HepG2 (cell line): ENCODE measurements at regions of chrX and their contacts with region 1.

Region 1: GRCh38 chrX:132226169-132226568 is 6.9 kb upstream of the RAP2C start:
- DNase-seq: no peak
- ATAC-seq: no peak
- H3K4me3 ChIP-seq: no peak overlapping the region
- H3K27ac ChIP-seq: no peak overlapping the region
- H3K4me1 ChIP-seq: no peaks in the 10 kb centered on the region
- H3K27me3 ChIP-seq: no peaks in the 10 kb centered on the region
- CTCF ChIP-seq: peak; percentile 5; the same call in 1 of the 2 replicates
- EP300 ChIP-seq: no peak
- POLR2A ChIP-seq: no peak
- RAD21 ChIP-seq: no peak

Region 2: DNA sequence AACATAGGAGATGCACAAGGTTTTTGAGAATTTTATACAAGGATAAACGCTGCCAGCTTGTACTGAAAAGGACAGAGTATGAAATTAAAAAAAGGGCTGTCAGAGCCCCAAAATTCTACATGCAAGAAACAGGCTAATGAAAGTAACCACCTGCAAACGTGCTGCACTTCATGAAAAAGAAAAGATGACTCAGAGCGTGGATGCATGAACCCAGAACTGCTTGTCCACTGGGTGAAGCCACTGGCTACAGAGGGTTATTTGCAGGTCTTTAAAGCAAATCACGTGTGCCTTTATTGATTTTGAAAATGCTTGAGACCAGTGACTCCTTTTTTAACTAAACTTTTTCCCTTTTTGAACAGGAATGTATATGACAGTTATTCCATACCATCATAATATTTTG is 73.0 kb before region 1 on chrX:
- CTCF ChIA-PET with region 1: no interaction called
- POLR2A ChIA-PET with region 1: no interaction called
- in situ Hi-C with region 1: no loop called
- intact Hi-C with region 1: no loop called
- DNase-seq: no peak
- ATAC-seq: no peak
- H3K4me3 ChIP-seq: no peak overlapping the region
- H3K27ac ChIP-seq: no peak overlapping the region
- H3K4me1 ChIP-seq: no peaks in the 10 kb centered on the region
- H3K27me3 ChIP-seq: no peaks in the 10 kb centered on the region
- CTCF ChIP-seq: no peak
- EP300 ChIP-seq: no peak
- POLR2A ChIP-seq: no peak
- RAD21 ChIP-seq: no peak

Region 3: GRCh38 chrX:132375934-132376333 is 149.8 kb after region 1 on chrX:
- CTCF ChIA-PET with region 1: no interaction called
- POLR2A ChIA-PET with region 1: no interaction called
- in situ Hi-C with region 1: no loop called
- intact Hi-C with region 1: loop called (anchors 10 kb)
- DNase-seq: no peak
- ATAC-seq: peak; percentile 57; the same call in 2 of the 3 replicates
- H3K4me3 ChIP-seq: no peak overlapping the region
- H3K27ac ChIP-seq: no peak overlapping the region
- H3K4me1 ChIP-seq: peaks cover 61% of the 10 kb centered on the region
- H3K27me3 ChIP-seq: no peaks in the 10 kb centered on the region
- CTCF ChIP-seq: peak; percentile 32
- EP300 ChIP-seq: no peak
- POLR2A ChIP-seq: no peak
- RAD21 ChIP-seq: no peak

Region 4: DNA sequence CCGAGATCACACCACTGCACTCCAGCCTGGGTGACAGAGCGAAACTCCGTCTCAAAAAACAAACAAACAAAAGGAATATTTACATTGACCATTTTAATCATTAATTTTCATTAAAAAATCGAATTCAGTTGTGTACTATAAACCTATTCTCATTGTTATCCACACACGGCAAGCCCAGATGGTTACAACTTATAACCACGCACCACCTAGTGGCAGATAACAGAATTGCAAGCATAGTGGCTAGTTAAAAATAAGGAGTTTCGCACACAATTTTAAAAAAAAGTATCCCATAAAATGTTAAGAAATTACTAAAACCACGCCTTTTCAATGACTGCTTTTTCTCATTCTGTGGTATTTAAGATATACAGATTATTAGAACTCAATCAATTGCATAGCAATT is 237.2 kb after region 1 on chrX:
- CTCF ChIA-PET with region 1: no interaction called
- POLR2A ChIA-PET with region 1: no interaction called
- in situ Hi-C with region 1: no loop called
- intact Hi-C with region 1: loop called (anchors 5 kb)
- DNase-seq: no peak
- ATAC-seq: no peak
- H3K4me3 ChIP-seq: no peak overlapping the region
- H3K27ac ChIP-seq: no peak overlapping the region
- H3K4me1 ChIP-seq: peaks cover 16% of the 10 kb centered on the region; the same call in 1 of the 2 replicates
- H3K27me3 ChIP-seq: no peaks in the 10 kb centered on the region
- CTCF ChIP-seq: peak; percentile 58
- EP300 ChIP-seq: no peak
- POLR2A ChIP-seq: no peak
- RAD21 ChIP-seq: no peak

Region 5: GRCh38 chrX:132615391-132616131 is 389.4 kb after region 1 on chrX:
- CTCF ChIA-PET with region 1: interaction called, 8 read pairs
- POLR2A ChIA-PET with region 1: no interaction called
- in situ Hi-C with region 1: loop called (anchors 5 kb)
- intact Hi-C with region 1: loop called (anchors 2 kb)
- DNase-seq: peak; percentile 44
- ATAC-seq: peak; percentile 79
- H3K4me3 ChIP-seq: no peak overlapping the region
- H3K27ac ChIP-seq: no peak overlapping the region
- H3K4me1 ChIP-seq: peaks cover 50% of the 10 kb centered on the region
- H3K27me3 ChIP-seq: no peaks in the 10 kb centered on the region
- CTCF ChIP-seq: peak; percentile 69
- EP300 ChIP-seq: no peak
- POLR2A ChIP-seq: no peak
- RAD21 ChIP-seq: 0 out of 2 replicates have a peak, but pooled peaks have one; percentile 23

Region 6: GRCh38 chrX:132631579-132632232 is 405.5 kb after region 1 on chrX:
- CTCF ChIA-PET with region 1: interaction called, 11 read pairs
- POLR2A ChIA-PET with region 1: no interaction called
- in situ Hi-C with region 1: no loop called
- intact Hi-C with region 1: loop called (anchors 5 kb)
- DNase-seq: peak; percentile 31
- ATAC-seq: peak; percentile 74
- H3K4me3 ChIP-seq: no peak overlapping the region
- H3K27ac ChIP-seq: no peak overlapping the region
- H3K4me1 ChIP-seq: no peaks in the 10 kb centered on the region
- H3K27me3 ChIP-seq: no peaks in the 10 kb centered on the region
- CTCF ChIP-seq: peak; percentile 68
- EP300 ChIP-seq: no peak
- POLR2A ChIP-seq: no peak
- RAD21 ChIP-seq: peak; percentile 55; the same call in 1 of the 2 replicates